Heart left ventricle (tissue), 16 donors: ENCODE measurements at regions of chr5 and their contacts with region 1.

Region 1: GRCh38 chr5:124748687-124749594 is 2.5 kb upstream of the ZNF608 start:
- DNase-seq: peak in 4 of 5 donors; percentile 74 to 82 (median 80)
- ATAC-seq: peak; percentile 88 to 94 (median 92)
- H3K4me3 ChIP-seq: peak overlapping the region; percentile 46 to 77 (median 68)
- H3K27ac ChIP-seq: peak overlapping the region; percentile 56 to 96 (median 91)
- H3K4me1 ChIP-seq: peaks cover 0 to 36% (median 6%) of the 10 kb centered on the region in 12 donors
- H3K27me3 ChIP-seq: peaks cover 0 to 21% (median 0%) of the 10 kb centered on the region in 9 donors
- CTCF ChIP-seq: no peak
- POLR2A ChIP-seq: peak in 1 of 2 donors; percentile 56

Region 2: DNA sequence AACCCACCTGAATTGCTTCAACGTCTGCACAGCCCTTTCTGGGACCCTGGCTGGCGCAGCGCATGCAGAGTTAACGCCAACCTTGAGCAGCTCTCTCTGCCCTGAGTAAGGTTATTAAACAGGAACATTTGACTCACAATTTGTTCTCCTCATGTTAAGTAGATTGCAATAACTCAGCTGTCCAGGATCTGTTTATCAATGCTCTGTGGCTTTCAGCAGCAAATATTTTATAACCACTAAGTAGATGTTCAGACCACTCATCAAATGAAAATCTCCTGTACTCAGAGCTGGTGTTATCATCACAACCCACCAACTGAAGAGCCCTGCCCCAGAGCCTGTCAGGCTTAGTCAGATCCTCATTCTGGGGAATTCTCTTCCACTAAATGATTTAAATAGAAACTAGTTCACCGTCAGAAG is 405.5 kb before region 1 on chr5:
- intact Hi-C with region 1: loop called in 2 of 10 experiments (anchors 5 to 10 kb)
- DNase-seq: no peak
- ATAC-seq: peak in 3 of 4 donors; percentile 27 to 64 (median 29)
- H3K4me3 ChIP-seq: no peak overlapping the region
- H3K27ac ChIP-seq: peak overlapping the region in 1 of 12 donors; percentile 39
- H3K4me1 ChIP-seq: peaks cover 4 to 36% (median 23%) of the 10 kb centered on the region in 12 donors
- H3K27me3 ChIP-seq: no peaks in the 10 kb centered on the region
- CTCF ChIP-seq: no peak
- POLR2A ChIP-seq: no peak

Region 3: GRCh38 chr5:124649491-124650146 is 99.3 kb before region 1 on chr5:
- intact Hi-C with region 1: loop called in 9 of 10 experiments (anchors 1 to 5 kb)
- DNase-seq: peak; percentile 76 to 86 (median 77)
- ATAC-seq: peak; percentile 19 to 66 (median 50)
- H3K4me3 ChIP-seq: peak overlapping the region in 8 of 12 donors; percentile 10 to 61 (median 41)
- H3K27ac ChIP-seq: peak overlapping the region; percentile 35 to 92 (median 83)
- H3K4me1 ChIP-seq: peaks cover 7 to 56% (median 46%) of the 10 kb centered on the region in 12 donors
- H3K27me3 ChIP-seq: peaks cover 0 to 57% (median 0%) of the 10 kb centered on the region in 9 donors
- CTCF ChIP-seq: no peak
- POLR2A ChIP-seq: no peak

Region 4: DNA sequence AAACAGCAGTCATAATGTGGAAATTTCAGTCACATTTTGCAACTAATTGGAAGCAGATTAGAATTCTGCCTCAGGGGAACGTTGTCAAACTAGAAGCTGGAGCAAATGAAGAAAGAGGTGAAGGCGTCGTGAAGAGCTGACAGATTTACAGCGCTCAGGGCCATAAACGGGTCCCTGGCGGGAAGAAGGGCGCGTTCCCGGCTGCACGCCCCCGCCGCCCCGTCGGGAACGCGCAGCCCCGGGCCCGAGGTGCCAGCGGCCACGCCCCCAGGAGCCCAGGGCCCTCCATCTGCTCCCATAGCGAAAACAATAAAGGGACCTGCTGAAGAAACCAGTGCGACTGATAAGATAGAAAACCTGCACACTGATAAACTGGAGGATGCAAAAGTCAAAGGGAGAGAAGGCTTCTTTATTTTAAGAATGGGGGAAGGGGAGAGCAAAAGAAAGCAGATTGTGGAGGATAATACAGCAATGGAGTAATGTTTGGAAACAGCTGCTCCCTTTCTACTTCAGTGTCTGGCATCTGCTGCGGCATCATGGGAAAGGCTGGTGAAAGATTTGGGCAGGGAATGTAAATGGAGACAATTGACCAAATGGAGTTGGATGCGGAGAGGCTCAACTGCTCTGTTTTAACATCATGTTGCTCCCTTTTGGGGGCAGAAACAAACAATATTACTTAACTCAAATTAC is 13.6 kb before region 1 on chr5:
- intact Hi-C with region 1: no loop called
- DNase-seq: no peak
- ATAC-seq: peak in 2 of 4 donors; percentile 61 to 73
- H3K4me3 ChIP-seq: peak overlapping the region in 11 of 12 donors; percentile 0 to 53 (median 38)
- H3K27ac ChIP-seq: peak overlapping the region in 7 of 12 donors; percentile 7 to 55 (median 35)
- H3K4me1 ChIP-seq: peaks cover 0 to 55% (median 24%) of the 10 kb centered on the region in 12 donors
- H3K27me3 ChIP-seq: no peaks in the 10 kb centered on the region
- CTCF ChIP-seq: no peak
- POLR2A ChIP-seq: no peak

Region 5: DNA sequence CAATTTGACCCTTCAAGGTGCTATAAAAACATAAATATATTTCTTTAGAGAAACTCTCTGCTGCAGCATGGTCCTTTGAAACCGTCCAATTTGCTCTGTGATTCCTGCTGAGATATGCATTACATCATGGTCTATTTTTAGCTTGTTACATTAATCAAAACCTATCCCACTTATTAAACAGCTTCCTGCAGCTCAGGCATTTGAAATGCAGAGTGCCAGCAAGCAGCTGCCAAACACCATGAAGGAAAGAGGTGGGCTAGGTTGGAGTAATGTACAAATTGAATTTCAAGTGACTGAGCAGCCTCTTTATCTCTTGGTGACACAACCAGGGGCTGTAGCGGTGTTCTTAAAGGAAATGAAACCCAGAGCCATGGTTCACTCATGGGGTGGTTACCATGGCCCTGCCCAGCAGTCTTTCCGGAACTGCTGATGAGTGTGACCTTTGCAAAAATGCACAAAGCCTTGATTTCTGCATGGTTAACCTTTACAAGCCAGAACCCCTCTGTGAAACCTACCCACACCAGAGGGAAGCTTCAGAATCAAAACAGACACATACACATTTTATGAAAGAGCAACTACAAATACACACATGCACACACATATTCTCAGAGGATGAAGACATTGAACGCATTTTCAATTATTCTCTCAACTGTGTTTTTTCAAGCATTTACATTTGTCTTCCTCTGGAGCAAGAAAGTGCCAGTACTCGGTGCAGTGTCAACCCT is 153.3 kb after region 1 on chr5:
- intact Hi-C with region 1: loop called (anchors 2 to 10 kb)
- DNase-seq: no peak
- ATAC-seq: peak in 3 of 4 donors; percentile 21 to 57 (median 26)
- H3K4me3 ChIP-seq: no peak overlapping the region
- H3K27ac ChIP-seq: no peak overlapping the region
- H3K4me1 ChIP-seq: peaks cover 12 to 35% (median 31%) of the 10 kb centered on the region in 12 donors
- H3K27me3 ChIP-seq: no peaks in the 10 kb centered on the region
- CTCF ChIP-seq: no peak
- POLR2A ChIP-seq: no peak

Region 6: DNA sequence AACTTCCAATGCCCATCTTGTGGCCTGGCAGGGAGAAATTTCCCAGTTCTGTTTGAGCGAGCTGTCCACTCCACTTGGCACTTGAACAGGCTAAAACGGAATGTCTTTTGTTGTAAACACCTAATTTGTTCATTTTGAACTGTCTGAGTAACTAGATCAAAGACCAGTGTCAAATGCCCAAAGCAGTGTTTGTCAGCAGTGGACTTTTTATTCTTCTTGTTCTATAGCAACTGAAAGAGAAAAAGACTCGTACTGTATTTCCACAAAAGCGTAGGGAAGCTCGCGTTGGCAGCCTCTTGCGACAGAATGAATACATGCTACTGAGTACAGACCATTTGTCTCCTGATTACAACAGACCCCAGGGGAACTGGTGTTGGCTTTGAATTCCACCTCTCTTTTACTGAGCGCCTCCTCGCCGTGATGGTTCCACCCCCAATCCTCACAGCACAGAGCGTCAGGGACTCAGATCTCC is 599.3 kb after region 1 on chr5:
- intact Hi-C with region 1: loop called in 1 of 10 experiments (anchors 10 kb)
- DNase-seq: peak in 4 of 5 donors; percentile 25 to 51 (median 32)
- ATAC-seq: peak in 3 of 4 donors; percentile 65 to 87 (median 85)
- H3K4me3 ChIP-seq: peak overlapping the region in 4 of 12 donors; percentile 10 to 35 (median 26)
- H3K27ac ChIP-seq: peak overlapping the region in 1 of 12 donors; percentile 6
- H3K4me1 ChIP-seq: peaks cover 0 to 22% (median 12%) of the 10 kb centered on the region in 12 donors
- H3K27me3 ChIP-seq: no peaks in the 10 kb centered on the region
- CTCF ChIP-seq: no peak
- POLR2A ChIP-seq: no peak